PC-3 (cell line): ENCODE measurements at regions of chr5 and their contacts with region 1.

Region 1: GRCh38 chr5:140295414-140295813 is 7.5 kb downstream of the PFDN1 start:
- DNase-seq: peak; percentile 96
- ATAC-seq: peak; percentile 52
- H3K4me3 ChIP-seq: no peak overlapping the region
- H3K27ac ChIP-seq: peak overlapping the region; percentile 7; the same call in 1 of the 2 replicates
- H3K4me1 ChIP-seq: peaks cover 82% of the 10 kb centered on the region
- H3K27me3 ChIP-seq: no peaks in the 10 kb centered on the region
- CTCF ChIP-seq: no peak

Region 2: GRCh38 chr5:139895647-139896046 is 399.8 kb before region 1 on chr5:
- CTCF ChIA-PET with region 1: no interaction called
- POLR2A ChIA-PET with region 1: no interaction called
- intact Hi-C with region 1: no loop called
- DNase-seq: no peak
- ATAC-seq: no peak
- H3K4me3 ChIP-seq: no peak overlapping the region
- H3K27ac ChIP-seq: no peak overlapping the region
- H3K4me1 ChIP-seq: no peaks in the 10 kb centered on the region
- H3K27me3 ChIP-seq: no peaks in the 10 kb centered on the region
- CTCF ChIP-seq: no peak

Region 3: GRCh38 chr5:140207250-140207964 is 88.0 kb before region 1 on chr5:
- CTCF ChIA-PET with region 1: no interaction called
- POLR2A ChIA-PET with region 1: no interaction called
- intact Hi-C with region 1: no loop called
- DNase-seq: no peak
- ATAC-seq: no peak
- H3K4me3 ChIP-seq: no peak overlapping the region
- H3K27ac ChIP-seq: no peak overlapping the region
- H3K4me1 ChIP-seq: no peaks in the 10 kb centered on the region
- H3K27me3 ChIP-seq: no peaks in the 10 kb centered on the region
- CTCF ChIP-seq: no peak

Region 4: DNA sequence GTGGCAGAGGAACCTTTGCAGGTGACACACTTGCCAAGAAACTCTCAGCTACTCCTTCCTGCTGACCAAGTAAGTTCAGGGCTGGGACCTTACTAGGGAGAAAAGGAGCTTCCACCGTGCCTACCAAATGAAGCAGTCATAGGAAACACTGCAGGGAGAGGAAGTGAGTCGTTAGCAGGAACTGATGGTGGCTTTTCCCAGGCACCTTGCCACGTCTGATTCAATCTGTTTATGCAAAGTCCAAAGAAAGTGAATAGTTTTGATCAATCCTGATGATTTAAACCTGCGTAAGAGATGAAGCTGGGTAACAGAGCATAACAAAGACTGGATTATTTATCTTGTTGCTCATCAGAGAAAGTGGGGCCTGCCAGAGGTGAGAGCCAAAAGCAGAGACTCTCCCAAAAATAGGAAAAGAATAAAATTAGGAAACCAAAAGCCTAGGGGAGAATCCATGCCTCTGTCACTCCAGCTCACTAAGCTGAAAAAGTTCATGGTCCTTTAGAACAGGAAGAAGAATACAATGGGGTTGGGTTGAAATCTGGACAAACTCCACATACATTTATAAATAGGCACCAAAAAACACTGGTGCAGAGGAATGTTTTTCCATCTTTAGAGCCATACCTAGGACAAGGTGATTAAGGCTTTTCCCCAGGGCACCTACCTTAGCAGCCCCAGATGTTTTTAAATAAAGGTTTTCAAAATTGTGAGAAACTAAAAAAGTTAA is 16.8 kb after region 1 on chr5:
- CTCF ChIA-PET with region 1: no interaction called
- POLR2A ChIA-PET with region 1: interaction called, 3 read pairs
- intact Hi-C with region 1: loop called (anchors 1 kb)
- DNase-seq: peak; percentile 98
- ATAC-seq: peak; percentile 93
- H3K4me3 ChIP-seq: no peak overlapping the region; the same call in 1 of the 2 replicates
- H3K27ac ChIP-seq: peak overlapping the region; percentile 98
- H3K4me1 ChIP-seq: peaks cover 41% of the 10 kb centered on the region
- H3K27me3 ChIP-seq: no peaks in the 10 kb centered on the region
- CTCF ChIP-seq: no peak

Region 5: GRCh38 chr5:140340605-140341121 is 45.2 kb after region 1 on chr5:
- CTCF ChIA-PET with region 1: no interaction called
- POLR2A ChIA-PET with region 1: interaction called, 21 read pairs
- intact Hi-C with region 1: loop called (anchors 2 kb)
- DNase-seq: peak; percentile 29
- ATAC-seq: no peak
- H3K4me3 ChIP-seq: no peak overlapping the region
- H3K27ac ChIP-seq: no peak overlapping the region
- H3K4me1 ChIP-seq: peaks cover 65% of the 10 kb centered on the region
- H3K27me3 ChIP-seq: no peaks in the 10 kb centered on the region
- CTCF ChIP-seq: no peak

Region 6: GRCh38 chr5:140497897-140498296 is 202.5 kb after region 1 on chr5:
- CTCF ChIA-PET with region 1: no interaction called
- POLR2A ChIA-PET with region 1: no interaction called
- intact Hi-C with region 1: no loop called
- DNase-seq: no peak
- ATAC-seq: no peak
- H3K4me3 ChIP-seq: no peak overlapping the region
- H3K27ac ChIP-seq: no peak overlapping the region
- H3K4me1 ChIP-seq: no peaks in the 10 kb centered on the region
- H3K27me3 ChIP-seq: no peaks in the 10 kb centered on the region
- CTCF ChIP-seq: no peak